SK-N-SH (cell line): ENCODE measurements at regions of chr15 and their contacts with region 1.

Region 1: DNA sequence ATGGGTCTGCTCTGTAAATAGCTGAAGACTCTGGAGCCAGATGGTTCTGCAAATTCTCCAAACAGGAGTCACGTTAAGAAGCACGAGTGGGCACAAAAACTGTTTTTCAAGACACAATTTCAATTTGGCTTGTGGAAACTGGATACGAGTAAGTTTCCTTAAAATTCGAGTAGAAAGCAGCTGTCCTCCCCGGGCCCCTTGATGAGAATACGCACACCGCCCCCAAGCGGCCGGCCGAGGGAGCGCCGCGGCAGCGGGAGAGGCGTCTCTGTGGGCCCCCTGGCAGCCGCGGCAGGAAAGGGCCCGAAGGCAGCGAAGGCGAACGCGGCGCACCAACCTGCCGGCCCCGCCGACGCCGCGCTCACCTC is 778 bp upstream of the THBS1 start:
- DNase-seq: peak; percentile 89
- H3K4me3 ChIP-seq: peak overlapping the region; percentile 59 to 72
- H3K27ac ChIP-seq: peak overlapping the region; percentile 72 to 94
- H3K4me1 ChIP-seq: peaks cover 5% of the 10 kb centered on the region in 2 experiments; a peak in 2 of 4 replicates
- H3K27me3 ChIP-seq: no peaks in the 10 kb centered on the region
- CTCF ChIP-seq: peak; percentile 89
- EP300 ChIP-seq: no peak
- RAD21 ChIP-seq: peak; percentile 85

Region 2: GRCh38 chr15:38817427-38818156 is 762.5 kb before region 1 on chr15:
- CTCF ChIA-PET with region 1: interaction called, 20 read pairs
- POLR2A ChIA-PET with region 1: no interaction called
- DNase-seq: peak; percentile 76
- H3K4me3 ChIP-seq: peak overlapping the region in 1 of 2 experiments; percentile 29; a peak in 1 of 4 replicates
- H3K27ac ChIP-seq: peak overlapping the region; percentile 72 to 93
- H3K4me1 ChIP-seq: peaks cover 10 to 25% of the 10 kb centered on the region in 2 experiments; a peak in 3 of 4 replicates
- H3K27me3 ChIP-seq: no peaks in the 10 kb centered on the region
- CTCF ChIP-seq: peak; percentile 100
- EP300 ChIP-seq: peak; percentile 82 to 87; a peak in 3 of 4 replicates
- RAD21 ChIP-seq: peak; percentile 96

Region 3: GRCh38 chr15:39171944-39172368 is 408.1 kb before region 1 on chr15:
- CTCF ChIA-PET with region 1: interaction called, 23 read pairs
- POLR2A ChIA-PET with region 1: no interaction called
- DNase-seq: peak; percentile 31
- H3K4me3 ChIP-seq: no peak overlapping the region
- H3K27ac ChIP-seq: peak overlapping the region; percentile 58 to 78; a peak in 3 of 4 replicates
- H3K4me1 ChIP-seq: peaks cover 7 to 8% of the 10 kb centered on the region in 2 experiments
- H3K27me3 ChIP-seq: no peaks in the 10 kb centered on the region
- CTCF ChIP-seq: peak; percentile 73
- EP300 ChIP-seq: peak in 1 of 2 experiments; percentile 77; a peak in 1 of 4 replicates
- RAD21 ChIP-seq: peak; percentile 87

Region 4: GRCh38 chr15:39530466-39531342 is 49.4 kb before region 1 on chr15:
- CTCF ChIA-PET with region 1: interaction called, 15 read pairs
- POLR2A ChIA-PET with region 1: no interaction called
- DNase-seq: peak; percentile 12
- H3K4me3 ChIP-seq: no peak overlapping the region
- H3K27ac ChIP-seq: no peak overlapping the region; a peak in 1 of 4 replicates
- H3K4me1 ChIP-seq: peaks cover 0 to 10% of the 10 kb centered on the region in 2 experiments; a peak in 2 of 4 replicates
- H3K27me3 ChIP-seq: no peaks in the 10 kb centered on the region
- CTCF ChIP-seq: no peak
- EP300 ChIP-seq: peak in 1 of 2 experiments; percentile 29; a peak in 1 of 4 replicates
- RAD21 ChIP-seq: no peak; the same call in 1 of the 2 replicates

Region 5: GRCh38 chr15:39565851-39566250 is 14.2 kb before region 1 on chr15:
- CTCF ChIA-PET with region 1: interaction called, 12 read pairs
- POLR2A ChIA-PET with region 1: interaction called, 3 read pairs
- DNase-seq: no peak
- H3K4me3 ChIP-seq: no peak overlapping the region
- H3K27ac ChIP-seq: no peak overlapping the region
- H3K4me1 ChIP-seq: no peaks in the 10 kb centered on the region
- H3K27me3 ChIP-seq: no peaks in the 10 kb centered on the region
- CTCF ChIP-seq: no peak
- EP300 ChIP-seq: no peak
- RAD21 ChIP-seq: no peak

Region 6: GRCh38 chr15:39623529-39623931 is 43.4 kb after region 1 on chr15:
- CTCF ChIA-PET with region 1: interaction called, 10 read pairs
- POLR2A ChIA-PET with region 1: no interaction called
- DNase-seq: no peak
- H3K4me3 ChIP-seq: no peak overlapping the region
- H3K27ac ChIP-seq: no peak overlapping the region
- H3K4me1 ChIP-seq: peaks cover 0 to 10% of the 10 kb centered on the region in 2 experiments; a peak in 2 of 4 replicates
- H3K27me3 ChIP-seq: no peaks in the 10 kb centered on the region
- CTCF ChIP-seq: no peak
- EP300 ChIP-seq: no peak
- RAD21 ChIP-seq: no peak